OCI-LY7 (cell line): ENCODE measurements at regions of chr16 and their contacts with region 1.

Region 1: GRCh38 chr16:27867122-27868110 is 196.1 kb downstream of the GSG1L start:
- DNase-seq: peak; percentile 56
- H3K4me3 ChIP-seq: no peak overlapping the region
- H3K27ac ChIP-seq: no peak overlapping the region
- H3K4me1 ChIP-seq: no peaks in the 10 kb centered on the region
- CTCF ChIP-seq: peak; percentile 74

Region 2: DNA sequence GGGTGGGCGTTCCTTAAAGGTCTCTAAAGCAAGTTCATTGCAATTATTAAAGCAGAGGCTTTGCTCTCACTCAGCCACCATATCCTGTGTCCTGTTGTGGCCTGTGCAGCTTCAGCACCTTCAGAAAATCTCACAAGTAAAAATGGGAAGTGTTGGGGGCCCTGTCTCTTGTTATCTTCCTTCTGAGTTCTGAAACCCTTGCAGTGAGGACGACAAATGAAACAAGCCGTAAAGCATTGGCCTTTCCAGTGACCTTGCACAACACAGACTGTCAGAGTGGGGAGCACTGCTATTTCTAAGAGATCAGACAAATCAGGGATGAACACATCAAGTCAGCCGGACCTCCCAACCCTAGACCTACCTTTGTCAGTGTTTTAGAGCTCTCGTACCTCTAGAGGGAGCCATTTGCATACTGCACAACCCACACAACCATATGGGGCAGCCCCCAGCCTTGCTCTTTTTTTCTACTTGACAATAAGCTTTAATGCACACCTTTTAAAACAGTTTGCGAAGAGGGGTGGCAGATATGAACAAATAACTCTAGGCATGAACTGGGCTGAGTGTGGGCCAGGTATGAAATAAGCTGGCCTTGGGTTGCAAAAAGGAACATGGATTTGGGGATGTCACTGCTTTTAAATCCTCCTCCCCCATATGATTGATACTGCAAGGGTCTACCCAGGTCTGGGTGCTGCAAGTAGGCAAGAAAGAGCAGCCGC is 227.7 kb before region 1 on chr16:
- CTCF ChIA-PET with region 1: no interaction called
- POLR2A ChIA-PET with region 1: no interaction called
- intact Hi-C with region 1: loop called (anchors 1 kb)
- DNase-seq: peak; percentile 53
- H3K4me3 ChIP-seq: no peak overlapping the region
- H3K27ac ChIP-seq: no peak overlapping the region
- H3K4me1 ChIP-seq: no peaks in the 10 kb centered on the region
- CTCF ChIP-seq: peak; percentile 88

Region 3: GRCh38 chr16:27890866-27891265 is 23.4 kb after region 1 on chr16:
- CTCF ChIA-PET with region 1: no interaction called
- POLR2A ChIA-PET with region 1: no interaction called
- intact Hi-C with region 1: no loop called
- DNase-seq: no peak
- H3K4me3 ChIP-seq: no peak overlapping the region
- H3K27ac ChIP-seq: no peak overlapping the region
- H3K4me1 ChIP-seq: no peaks in the 10 kb centered on the region
- CTCF ChIP-seq: no peak